ENCODE measurements at regions of chr15 and their contacts with region 1.

Region 1: DNA sequence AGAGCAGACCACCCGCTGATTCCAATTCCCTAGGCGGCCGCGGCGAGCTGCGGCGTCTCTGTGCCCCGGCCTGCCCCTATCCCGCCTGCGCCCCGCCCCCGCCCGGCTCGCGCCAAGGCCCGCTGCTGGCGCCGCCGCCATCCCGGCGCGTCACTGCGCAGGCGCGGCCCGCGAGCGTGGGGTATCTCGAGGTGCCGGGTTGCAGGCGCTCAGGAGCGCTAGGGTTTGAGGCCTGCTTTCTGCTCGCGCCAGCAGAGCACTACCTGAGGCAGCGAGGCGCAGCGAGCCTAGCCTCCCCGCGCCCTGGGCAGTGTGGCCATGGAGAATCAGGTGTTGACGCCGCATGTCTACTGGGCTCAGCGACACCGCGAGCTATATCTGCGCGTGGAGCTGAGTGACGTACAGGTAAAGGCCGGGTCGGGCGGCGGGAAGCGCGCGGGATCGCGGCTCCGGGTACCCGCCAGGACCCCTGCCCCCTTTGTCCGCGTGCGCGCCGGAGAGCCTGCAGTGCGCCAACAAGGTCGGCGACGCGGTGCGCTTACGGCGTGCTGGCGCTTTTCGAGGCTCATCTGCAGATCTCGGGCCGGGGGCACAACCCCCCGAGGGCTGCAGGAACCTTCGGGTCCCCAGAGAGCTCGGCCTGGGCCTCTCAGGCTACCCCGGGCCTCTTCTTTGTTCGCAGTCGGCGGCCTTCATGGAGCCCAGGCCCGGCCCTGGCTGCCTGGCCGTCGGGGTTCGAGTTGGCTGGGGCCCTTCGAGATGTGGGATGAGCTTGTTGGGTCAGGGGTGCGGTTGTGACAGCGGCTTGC is at the start of gene HACD3:
- DNase-seq: peak; percentile 83 to 98 (median 89)
- ATAC-seq: peak; percentile 97
- H3K4me3 ChIP-seq: peak within 1 kb of the TSS; percentile 94
- H3K4me3 Mint-ChIP-seq: peak within 1 kb of the TSS; percentile 67 to 91 (median 86)
- H3K27ac ChIP-seq: peak within 1 kb of the TSS; percentile 79
- H3K27ac Mint-ChIP-seq: peak within 1 kb of the TSS; percentile 78 to 95 (median 85)
- H3K4me1 ChIP-seq: peaks cover 8 to 13% of the 10 kb centered on the region in 2 donors
- H3K4me1 Mint-ChIP-seq: peaks cover 23 to 45% (median 40%) of the 10 kb centered on the region in 7 donors
- H3K27me3 ChIP-seq: no peaks in the 10 kb centered on the region
- H3K27me3 Mint-ChIP-seq: no peaks in the 10 kb centered on the region
- total RNA-seq, gene HACD3: 18.3 to 30.0 (median 23.9) TPM

Region 2: DNA sequence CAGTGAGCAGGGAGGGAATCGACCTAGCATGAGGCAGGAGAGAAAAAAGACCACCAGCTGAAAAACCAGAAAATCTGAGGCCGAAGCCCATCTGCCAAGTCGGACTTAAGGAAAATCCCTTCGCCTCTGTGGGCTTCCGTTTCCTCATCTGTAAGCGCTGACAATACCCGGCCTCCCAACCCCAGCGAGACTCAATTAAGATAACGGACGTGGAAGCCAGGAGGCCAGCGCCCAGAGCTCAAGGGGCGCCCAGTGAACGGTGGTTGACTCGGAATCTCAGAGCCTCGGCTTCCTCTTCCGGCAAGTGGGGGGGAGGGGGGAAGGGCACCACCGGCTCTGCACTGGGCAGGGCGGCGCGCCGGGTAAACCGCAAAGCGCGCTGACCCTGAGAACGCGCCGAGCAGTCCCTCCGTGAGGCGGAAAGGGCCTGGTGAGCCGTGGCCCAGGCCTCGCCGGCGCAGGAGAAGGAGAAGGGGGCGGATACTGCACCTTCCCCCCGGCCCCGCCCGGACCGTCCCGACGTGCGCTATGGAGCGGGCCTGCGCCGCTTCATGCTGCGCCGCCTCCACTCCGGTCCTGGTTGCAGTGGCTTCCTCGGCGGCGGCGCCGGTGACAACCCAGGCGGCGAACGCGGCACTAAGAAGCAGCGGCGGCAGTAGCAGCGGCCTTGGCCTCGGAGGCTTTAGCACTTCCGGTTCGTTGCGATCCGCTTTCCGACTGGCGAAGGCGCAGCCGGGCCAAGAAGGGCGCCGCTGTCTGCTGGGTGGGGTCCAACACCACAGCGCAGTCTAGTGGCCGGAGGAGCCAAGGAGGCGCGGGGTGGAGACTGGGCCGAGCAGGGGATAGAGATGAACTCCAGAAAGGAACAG is 13.3 kb before region 1 on chr15 and contains the start of gene DPP8:
- CTCF ChIA-PET with region 1: interaction called, 4 read pairs
- POLR2A ChIA-PET with region 1: interaction called, 22 read pairs
- intact Hi-C with region 1: loop called (anchors 1 kb)
- DNase-seq: peak; percentile 88 to 96 (median 92)
- ATAC-seq: peak; percentile 98
- H3K4me3 ChIP-seq: peak within 1 kb of the TSS; percentile 75
- H3K4me3 Mint-ChIP-seq: peak within 1 kb of the TSS; percentile 93 to 100 (median 96)
- H3K27ac ChIP-seq: peak within 1 kb of the TSS; percentile 83
- H3K27ac Mint-ChIP-seq: peak within 1 kb of the TSS; percentile 86 to 99 (median 94)
- H3K4me1 ChIP-seq: peaks cover 22 to 25% of the 10 kb centered on the region in 2 donors
- H3K4me1 Mint-ChIP-seq: peaks cover 30 to 51% (median 44%) of the 10 kb centered on the region in 7 donors
- H3K27me3 ChIP-seq: no peaks in the 10 kb centered on the region
- H3K27me3 Mint-ChIP-seq: no peaks in the 10 kb centered on the region
- total RNA-seq, gene DPP8: 38.4 to 54.6 (median 40.8) TPM

Region 3: DNA sequence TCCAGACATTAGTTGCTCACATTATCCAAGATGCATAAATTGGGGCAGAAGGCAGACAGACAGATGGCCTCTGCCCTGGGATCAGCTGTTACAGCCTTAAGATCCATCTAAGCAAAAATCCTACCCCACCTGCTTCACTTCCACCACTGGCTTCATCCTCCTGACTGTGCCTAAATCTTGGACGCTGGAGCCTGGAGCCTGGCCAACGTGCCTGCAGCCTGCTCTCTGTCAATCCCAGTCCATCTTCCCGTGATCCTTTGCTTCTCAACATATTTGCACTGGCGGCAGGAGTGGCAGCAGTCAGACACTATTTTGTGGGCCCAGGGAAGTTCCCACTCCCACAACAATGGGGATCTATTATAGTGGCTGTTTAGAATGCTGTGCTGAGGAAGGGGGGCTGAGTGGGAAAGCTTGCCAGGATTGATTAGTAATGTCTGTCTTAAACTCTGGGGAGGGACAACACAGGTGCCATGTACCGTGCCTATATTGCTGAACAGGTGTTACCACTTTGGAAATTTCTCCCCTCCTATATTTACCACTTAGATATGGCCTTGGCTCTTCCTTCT is 601.8 kb after region 1 on chr15:
- CTCF ChIA-PET with region 1: no interaction called
- POLR2A ChIA-PET with region 1: no interaction called
- intact Hi-C with region 1: no loop called
- DNase-seq: no peak
- ATAC-seq: no peak
- H3K4me3 ChIP-seq: no peak overlapping the region
- H3K4me3 Mint-ChIP-seq: no peak overlapping the region
- H3K27ac ChIP-seq: no peak overlapping the region
- H3K27ac Mint-ChIP-seq: no peak overlapping the region
- H3K4me1 ChIP-seq: no peaks in the 10 kb centered on the region
- H3K4me1 Mint-ChIP-seq: peaks cover 4 to 17% (median 12%) of the 10 kb centered on the region in 7 donors
- H3K27me3 ChIP-seq: no peaks in the 10 kb centered on the region
- H3K27me3 Mint-ChIP-seq: peaks cover 0 to 12% (median 0%) of the 10 kb centered on the region in 5 donors

Measured in naive thymus-derived CD4-positive, alpha-beta T cell (primary cell).